Heart left ventricle (tissue), 16 donors: ENCODE measurements at regions of chr12 and their contacts with region 1.

Region 1: GRCh38 chr12:31874961-31875608 is 84.1 kb upstream of the RESF1 start:
- DNase-seq: peak; percentile 65 to 82 (median 70)
- ATAC-seq: peak; percentile 82 to 96 (median 90)
- H3K4me3 ChIP-seq: no peak overlapping the region
- H3K27ac ChIP-seq: peak overlapping the region; percentile 30 to 90 (median 70)
- H3K4me1 ChIP-seq: peaks cover 0 to 27% (median 8%) of the 10 kb centered on the region in 12 donors
- H3K27me3 ChIP-seq: no peaks in the 10 kb centered on the region
- CTCF ChIP-seq: no peak
- POLR2A ChIP-seq: no peak

Region 2: DNA sequence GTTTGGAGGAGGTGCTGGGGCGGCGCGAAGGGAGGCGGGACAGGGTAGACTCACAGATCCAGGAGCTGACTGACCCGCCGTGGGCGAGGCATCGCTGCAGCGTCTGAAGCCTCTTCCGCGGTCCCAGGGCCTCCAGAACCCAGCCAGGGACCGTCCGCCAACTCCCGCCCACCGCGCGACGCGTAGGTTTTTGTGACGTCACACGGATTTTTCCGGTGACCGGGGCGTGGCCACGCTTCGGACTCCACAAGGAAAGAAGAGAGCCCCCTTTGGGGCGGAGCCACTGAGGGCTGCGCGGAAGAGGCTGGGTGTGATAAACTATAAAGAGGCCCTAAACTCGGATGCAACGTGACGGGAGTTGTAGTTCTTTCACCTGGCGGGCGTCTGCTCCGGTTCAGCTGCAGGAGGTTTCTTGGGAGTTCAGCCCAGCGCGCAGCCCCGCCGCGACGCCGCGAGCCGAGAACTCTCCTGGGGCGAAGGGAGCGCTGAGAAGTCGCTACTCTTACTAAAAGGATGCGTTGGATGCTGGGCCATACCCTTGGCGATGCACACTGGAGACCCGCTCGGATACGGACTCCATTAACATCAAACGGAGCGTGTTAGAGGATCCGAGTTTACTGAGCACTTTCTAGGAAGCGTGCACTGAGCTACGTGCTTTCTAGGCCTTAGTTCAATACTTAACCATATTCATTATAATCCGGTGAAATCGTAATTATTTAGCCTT is 146.0 kb before region 1 on chr12 and contains the start of gene AMN1:
- intact Hi-C with region 1: loop called in 4 of 10 experiments (anchors 5 to 10 kb)
- DNase-seq: peak; percentile 98 to 100 (median 99)
- ATAC-seq: peak; percentile 96 to 98 (median 98)
- H3K4me3 ChIP-seq: peak within 1 kb of the TSS; percentile 46 to 85 (median 63)
- H3K27ac ChIP-seq: peak within 1 kb of the TSS; percentile 92 to 98 (median 95)
- H3K4me1 ChIP-seq: peaks cover 0 to 83% (median 41%) of the 10 kb centered on the region in 12 donors
- H3K27me3 ChIP-seq: no peaks in the 10 kb centered on the region
- CTCF ChIP-seq: peak in 3 of 12 donors; percentile 14 to 35 (median 18)
- POLR2A ChIP-seq: peak in 1 of 2 donors; percentile 84
- total RNA-seq, gene AMN1: 8.5 to 22.5 (median 16.4) TPM

Region 3: GRCh38 chr12:31832740-31833729 is 42.0 kb before region 1 on chr12:
- intact Hi-C with region 1: loop called in 1 of 10 experiments (anchors 10 kb)
- DNase-seq: peak in 2 of 5 donors; percentile 12 to 18
- ATAC-seq: peak in 3 of 4 donors; percentile 36 to 66 (median 62)
- H3K4me3 ChIP-seq: no peak overlapping the region
- H3K27ac ChIP-seq: peak overlapping the region in 2 of 12 donors; percentile 39 to 85
- H3K4me1 ChIP-seq: peaks cover 0 to 32% (median 0%) of the 10 kb centered on the region in 12 donors
- H3K27me3 ChIP-seq: no peaks in the 10 kb centered on the region
- CTCF ChIP-seq: no peak
- POLR2A ChIP-seq: no peak